MCF 10A (cell line): ENCODE measurements at regions of chr10 and their contacts with region 1.

Region 1: GRCh38 chr10:91335147-91335546 is 75.0 kb upstream of the HECTD2 start:
- DNase-seq: no peak
- H3K4me3 Mint-ChIP-seq: no peak overlapping the region
- H3K27ac Mint-ChIP-seq: no peak overlapping the region
- H3K4me1 Mint-ChIP-seq: no peaks in the 10 kb centered on the region
- H3K27me3 Mint-ChIP-seq: no peaks in the 10 kb centered on the region
- CTCF ChIP-seq: no peak

Region 2: GRCh38 chr10:90674928-90675327 is 660.2 kb before region 1 on chr10:
- CTCF ChIA-PET with region 1: no interaction called
- POLR2A ChIA-PET with region 1: no interaction called
- intact Hi-C with region 1: loop called (anchors 5 kb)
- DNase-seq: peak; percentile 73
- H3K4me3 Mint-ChIP-seq: peak overlapping the region; percentile 17
- H3K27ac Mint-ChIP-seq: peak overlapping the region; percentile 78
- H3K4me1 Mint-ChIP-seq: peaks cover 18% of the 10 kb centered on the region
- H3K27me3 Mint-ChIP-seq: no peaks in the 10 kb centered on the region
- CTCF ChIP-seq: no peak

Region 3: GRCh38 chr10:91010952-91011351 is 324.2 kb before region 1 on chr10:
- CTCF ChIA-PET with region 1: no interaction called
- POLR2A ChIA-PET with region 1: no interaction called
- intact Hi-C with region 1: no loop called
- DNase-seq: no peak
- H3K4me3 Mint-ChIP-seq: no peak overlapping the region
- H3K27ac Mint-ChIP-seq: no peak overlapping the region
- H3K4me1 Mint-ChIP-seq: no peaks in the 10 kb centered on the region
- H3K27me3 Mint-ChIP-seq: no peaks in the 10 kb centered on the region
- CTCF ChIP-seq: no peak

Region 4: DNA sequence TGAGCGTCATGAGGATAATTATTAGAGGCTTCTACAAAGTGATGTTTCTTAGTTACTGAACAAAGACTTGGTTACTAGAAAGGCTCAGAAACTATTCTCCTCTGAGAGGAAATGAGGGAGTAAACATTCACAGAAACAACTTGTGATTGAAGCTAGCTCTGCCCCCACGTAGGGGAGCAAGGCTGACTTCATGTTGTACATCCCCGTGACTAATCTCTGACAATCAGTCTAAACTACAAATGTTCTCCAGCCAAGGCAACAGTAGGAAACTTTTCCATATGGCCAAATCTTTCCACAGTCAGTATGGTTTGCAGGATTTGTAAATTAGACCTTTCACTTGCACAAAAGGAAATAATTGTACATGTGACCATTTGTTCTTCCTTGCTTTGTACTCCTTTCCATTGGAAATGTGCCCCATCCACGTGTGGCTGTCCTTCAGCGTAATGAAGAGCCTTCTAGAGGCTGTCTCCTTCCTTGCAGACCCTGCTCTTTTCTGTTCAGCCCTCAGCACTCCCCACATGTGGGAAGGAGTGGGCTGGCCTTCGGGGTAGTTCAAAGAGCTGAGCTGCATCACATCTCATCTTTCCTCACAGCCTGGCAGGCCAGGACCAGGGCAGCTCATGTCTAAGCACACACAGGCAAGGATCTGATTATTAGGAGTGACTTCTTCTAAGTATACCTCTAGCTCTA is 21.2 kb before region 1 on chr10:
- CTCF ChIA-PET with region 1: no interaction called
- POLR2A ChIA-PET with region 1: no interaction called
- intact Hi-C with region 1: no loop called
- DNase-seq: no peak
- H3K4me3 Mint-ChIP-seq: no peak overlapping the region
- H3K27ac Mint-ChIP-seq: no peak overlapping the region
- H3K4me1 Mint-ChIP-seq: peaks cover 5% of the 10 kb centered on the region
- H3K27me3 Mint-ChIP-seq: no peaks in the 10 kb centered on the region
- CTCF ChIP-seq: no peak